ENCODE measurements at regions of chr22 and their contacts with region 1.

Region 1: DNA sequence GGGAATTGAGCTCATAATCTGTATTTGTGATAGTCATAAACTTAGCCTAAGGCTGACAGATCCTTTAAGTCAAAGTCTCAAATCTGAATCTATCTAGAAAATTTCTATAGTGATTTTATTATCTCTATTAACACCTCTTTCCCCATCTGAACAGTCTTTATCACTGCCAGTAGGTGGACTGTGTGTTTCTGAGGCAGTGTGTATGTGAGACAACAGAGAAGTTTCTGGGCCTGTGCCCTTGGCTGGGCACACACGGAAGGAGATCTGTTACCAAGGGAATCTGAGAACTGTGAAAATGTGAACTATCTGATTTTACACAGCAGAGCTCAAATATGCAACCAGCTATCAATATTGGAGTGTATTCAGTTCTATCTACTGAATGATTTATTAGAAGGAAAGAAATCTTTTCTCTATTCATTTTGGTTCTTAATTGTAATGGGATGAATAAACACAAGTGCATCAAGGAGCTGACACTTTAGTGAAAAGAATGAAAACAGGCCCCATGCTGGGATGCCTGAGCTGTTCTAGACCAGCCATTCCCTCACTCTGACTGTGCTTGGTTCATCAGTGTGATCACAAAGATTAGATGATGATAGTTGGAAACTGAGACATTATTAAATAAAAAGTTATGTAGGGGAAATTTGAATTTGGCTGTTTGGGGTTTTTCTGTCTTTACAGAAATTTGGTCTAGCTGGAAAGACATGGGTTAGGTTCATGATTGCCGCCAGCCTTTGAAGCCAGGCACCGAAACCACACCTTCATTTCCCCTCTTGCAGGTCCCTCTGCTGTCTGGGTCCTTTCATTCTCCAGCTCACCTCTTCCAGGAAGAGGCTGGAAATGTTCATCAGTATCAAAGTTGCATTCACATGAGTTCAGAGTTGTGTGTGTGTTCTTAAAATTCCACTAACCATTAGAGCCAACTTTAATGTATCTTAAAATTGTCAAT is 68.1 kb downstream of the LIF start:
- DNase-seq: no peak
- H3K4me3 ChIP-seq: no peak overlapping the region
- H3K27ac ChIP-seq: no peak overlapping the region
- H3K4me1 ChIP-seq: no peaks in the 10 kb centered on the region
- H3K27me3 ChIP-seq: no peaks in the 10 kb centered on the region
- CTCF ChIP-seq: no peak; the same call in 1 of the 2 replicates

Region 2: GRCh38 chr22:30116362-30117117 is 61.9 kb before region 1 on chr22:
- CTCF ChIA-PET with region 1: no interaction called
- POLR2A ChIA-PET with region 1: no interaction called
- intact Hi-C with region 1: no loop called
- DNase-seq: peak in 1 of 2 experiments; percentile 84
- H3K4me3 ChIP-seq: no peak overlapping the region
- H3K27ac ChIP-seq: peak overlapping the region; percentile 82
- H3K4me1 ChIP-seq: peaks cover 44% of the 10 kb centered on the region
- H3K27me3 ChIP-seq: no peaks in the 10 kb centered on the region
- CTCF ChIP-seq: no peak

Region 3: DNA sequence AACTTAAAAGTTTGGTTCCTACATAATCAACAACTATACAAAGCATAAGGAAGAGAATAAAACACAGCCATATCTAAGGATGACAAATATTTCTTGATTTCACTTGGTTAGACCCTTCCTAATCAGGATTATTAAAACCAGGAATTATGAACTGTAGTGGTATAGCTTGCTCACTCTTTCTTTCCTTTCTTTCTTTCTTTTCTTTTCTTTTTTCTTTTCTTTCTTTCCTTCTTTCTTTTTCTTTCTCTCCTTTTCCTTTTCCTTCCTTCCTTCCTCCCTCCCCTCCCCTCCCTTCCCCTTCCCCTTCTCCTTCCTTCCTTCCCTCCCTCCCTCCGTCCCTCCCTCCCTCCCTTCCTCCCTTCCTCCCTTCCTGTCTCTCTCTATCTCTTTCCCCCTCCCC is 20.2 kb before region 1 on chr22:
- CTCF ChIA-PET with region 1: no interaction called
- POLR2A ChIA-PET with region 1: interaction called, 19 read pairs
- intact Hi-C with region 1: no loop called
- DNase-seq: no peak
- H3K4me3 ChIP-seq: no peak overlapping the region
- H3K27ac ChIP-seq: no peak overlapping the region
- H3K4me1 ChIP-seq: peaks cover 16% of the 10 kb centered on the region
- H3K27me3 ChIP-seq: no peaks in the 10 kb centered on the region
- CTCF ChIP-seq: no peak

Region 4: GRCh38 chr22:30205281-30206115 is 27.0 kb after region 1 on chr22:
- CTCF ChIA-PET with region 1: no interaction called
- POLR2A ChIA-PET with region 1: interaction called, 13 read pairs
- intact Hi-C with region 1: no loop called
- DNase-seq: peak in 1 of 2 experiments; percentile 91
- H3K4me3 ChIP-seq: peak overlapping the region; percentile 27; the same call in 1 of the 2 replicates
- H3K27ac ChIP-seq: peak overlapping the region; percentile 98
- H3K4me1 ChIP-seq: peaks cover 88% of the 10 kb centered on the region
- H3K27me3 ChIP-seq: no peaks in the 10 kb centered on the region
- CTCF ChIP-seq: no peak